ENCODE measurements at regions of chr5 and their contacts with region 1.

Region 1: GRCh38 chr5:124951661-124952060 is 205.2 kb upstream of the ZNF608 start:
- DNase-seq: peak in 2 of 9 experiments; percentile 46 to 59
- ATAC-seq: peak; percentile 23
- H3K4me3 ChIP-seq: no peak overlapping the region
- H3K4me3 Mint-ChIP-seq: no peak overlapping the region
- H3K27ac ChIP-seq: peak overlapping the region in 1 of 2 experiments; percentile 45
- H3K27ac Mint-ChIP-seq: no peak overlapping the region
- H3K4me1 ChIP-seq: no peaks in the 10 kb centered on the region
- H3K4me1 Mint-ChIP-seq: no peaks in the 10 kb centered on the region
- H3K27me3 ChIP-seq: no peaks in the 10 kb centered on the region
- H3K27me3 Mint-ChIP-seq: no peaks in the 10 kb centered on the region
- CTCF ChIP-seq: no peak

Region 2: GRCh38 chr5:124812754-124813358 is 138.8 kb before region 1 on chr5:
- CTCF ChIA-PET with region 1: no interaction called
- POLR2A ChIA-PET with region 1: no interaction called
- intact Hi-C with region 1: no loop called
- DNase-seq: no peak
- ATAC-seq: no peak
- H3K4me3 ChIP-seq: no peak overlapping the region
- H3K4me3 Mint-ChIP-seq: no peak overlapping the region
- H3K27ac ChIP-seq: no peak overlapping the region
- H3K27ac Mint-ChIP-seq: no peak overlapping the region
- H3K4me1 ChIP-seq: no peaks in the 10 kb centered on the region
- H3K4me1 Mint-ChIP-seq: no peaks in the 10 kb centered on the region
- H3K27me3 ChIP-seq: no peaks in the 10 kb centered on the region
- H3K27me3 Mint-ChIP-seq: no peaks in the 10 kb centered on the region
- CTCF ChIP-seq: no peak

Region 3: GRCh38 chr5:124902097-124902821 is 49.4 kb before region 1 on chr5:
- CTCF ChIA-PET with region 1: no interaction called
- POLR2A ChIA-PET with region 1: no interaction called
- intact Hi-C with region 1: no loop called
- DNase-seq: peak in 2 of 9 experiments; percentile 11 to 21
- ATAC-seq: no peak
- H3K4me3 ChIP-seq: no peak overlapping the region
- H3K4me3 Mint-ChIP-seq: no peak overlapping the region
- H3K27ac ChIP-seq: no peak overlapping the region
- H3K27ac Mint-ChIP-seq: no peak overlapping the region
- H3K4me1 ChIP-seq: no peaks in the 10 kb centered on the region
- H3K4me1 Mint-ChIP-seq: peaks cover 6% of the 10 kb centered on the region
- H3K27me3 ChIP-seq: no peaks in the 10 kb centered on the region
- H3K27me3 Mint-ChIP-seq: no peaks in the 10 kb centered on the region
- CTCF ChIP-seq: no peak

Region 4: DNA sequence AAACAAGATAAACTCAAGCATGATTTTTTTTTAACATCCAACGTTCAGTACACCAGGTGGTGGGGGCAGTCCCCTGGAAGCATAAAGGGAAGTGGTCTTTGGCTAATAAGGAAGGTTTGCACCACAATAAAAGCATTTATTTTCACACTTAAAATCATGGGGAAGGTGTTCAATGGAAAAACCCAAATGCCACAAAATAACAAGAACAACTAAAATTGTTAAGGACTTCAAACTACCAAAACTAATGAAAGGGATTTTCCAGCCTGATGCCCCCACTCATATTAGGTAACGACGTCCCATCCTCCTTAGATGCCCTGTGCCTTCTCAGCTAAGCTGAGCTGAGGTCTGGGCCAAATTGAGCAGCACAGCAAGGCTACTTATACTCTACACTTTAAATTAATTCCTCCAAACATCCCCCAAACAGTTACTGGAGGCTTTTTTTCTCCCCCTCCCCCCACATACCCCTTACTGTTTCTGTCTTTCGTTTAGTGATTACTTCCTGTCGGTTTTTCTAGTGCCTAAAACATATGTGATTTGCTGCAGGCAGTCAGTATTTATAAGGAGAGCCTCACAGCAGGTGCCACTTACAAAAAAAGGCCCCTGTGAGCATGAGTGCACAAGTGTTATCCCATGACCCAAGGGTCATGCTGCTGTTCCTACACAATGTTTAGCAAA is 54.5 kb after region 1 on chr5:
- CTCF ChIA-PET with region 1: no interaction called
- POLR2A ChIA-PET with region 1: no interaction called
- intact Hi-C with region 1: loop called in 1 of 2 experiments (anchors 2 kb)
- DNase-seq: peak in 1 of 9 experiments; percentile 5
- ATAC-seq: no peak
- H3K4me3 ChIP-seq: no peak overlapping the region
- H3K4me3 Mint-ChIP-seq: no peak overlapping the region
- H3K27ac ChIP-seq: no peak overlapping the region
- H3K27ac Mint-ChIP-seq: no peak overlapping the region
- H3K4me1 ChIP-seq: no peaks in the 10 kb centered on the region
- H3K4me1 Mint-ChIP-seq: no peaks in the 10 kb centered on the region
- H3K27me3 ChIP-seq: no peaks in the 10 kb centered on the region
- H3K27me3 Mint-ChIP-seq: peaks cover under 1% of the 10 kb centered on the region
- CTCF ChIP-seq: no peak